Dorsolateral prefrontal cortex (tissue), 120 donors: ENCODE measurements at regions of chr6 and their contacts with region 1.

Region 1: DNA sequence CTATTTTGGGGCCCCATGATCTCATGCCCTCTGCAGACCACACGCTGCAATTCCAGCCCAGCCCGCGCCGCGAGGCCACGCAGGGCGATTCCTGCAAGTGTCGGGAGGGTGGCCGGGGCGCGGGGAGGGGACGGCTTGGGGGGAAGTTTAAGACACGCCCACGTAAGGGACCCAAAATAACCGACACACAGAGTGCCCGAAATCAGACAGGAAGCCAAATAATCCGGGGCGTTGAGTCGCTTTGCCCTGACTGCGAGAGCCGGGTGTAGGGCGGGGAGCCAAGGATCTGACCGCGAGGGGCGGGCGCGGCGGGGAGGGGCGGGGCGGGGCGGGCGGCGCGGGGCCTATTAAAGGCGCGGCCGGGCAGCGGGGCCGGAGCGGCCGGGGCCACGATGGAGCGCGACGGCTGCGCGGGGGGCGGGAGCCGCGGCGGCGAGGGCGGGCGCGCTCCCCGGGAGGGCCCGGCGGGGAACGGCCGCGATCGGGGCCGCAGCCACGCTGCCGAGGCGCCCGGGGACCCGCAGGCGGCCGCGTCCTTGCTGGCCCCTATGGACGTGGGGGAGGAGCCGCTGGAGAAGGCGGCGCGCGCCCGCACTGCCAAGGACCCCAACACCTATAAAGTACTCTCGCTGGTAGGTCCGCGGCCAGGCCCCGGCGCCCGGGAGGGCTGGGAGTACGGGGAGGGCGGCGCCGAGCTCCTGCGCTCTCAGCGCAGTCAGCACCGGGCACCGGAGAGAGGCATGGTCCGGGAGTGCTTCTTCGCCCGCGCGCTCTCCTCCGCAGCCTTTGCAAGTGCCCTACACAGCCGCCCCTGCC is at the start of gene ENPP1:
- DNase-seq: peak; percentile 57 to 79 (median 70)
- H3K4me3 ChIP-seq: peak within 1 kb of the TSS; percentile 56 to 88 (median 76)
- H3K27ac ChIP-seq: peak within 1 kb of the TSS in 42 of 59 donors; percentile 0 to 77 (median 48)
- H3K27me3 ChIP-seq: no peaks in the 10 kb centered on the region
- CTCF ChIP-seq: peak in 44 of 56 donors; percentile 7 to 52 (median 34)
- total RNA-seq, gene ENPP1: 0.87 to 5.2 (median 1.6) TPM

Region 2: DNA sequence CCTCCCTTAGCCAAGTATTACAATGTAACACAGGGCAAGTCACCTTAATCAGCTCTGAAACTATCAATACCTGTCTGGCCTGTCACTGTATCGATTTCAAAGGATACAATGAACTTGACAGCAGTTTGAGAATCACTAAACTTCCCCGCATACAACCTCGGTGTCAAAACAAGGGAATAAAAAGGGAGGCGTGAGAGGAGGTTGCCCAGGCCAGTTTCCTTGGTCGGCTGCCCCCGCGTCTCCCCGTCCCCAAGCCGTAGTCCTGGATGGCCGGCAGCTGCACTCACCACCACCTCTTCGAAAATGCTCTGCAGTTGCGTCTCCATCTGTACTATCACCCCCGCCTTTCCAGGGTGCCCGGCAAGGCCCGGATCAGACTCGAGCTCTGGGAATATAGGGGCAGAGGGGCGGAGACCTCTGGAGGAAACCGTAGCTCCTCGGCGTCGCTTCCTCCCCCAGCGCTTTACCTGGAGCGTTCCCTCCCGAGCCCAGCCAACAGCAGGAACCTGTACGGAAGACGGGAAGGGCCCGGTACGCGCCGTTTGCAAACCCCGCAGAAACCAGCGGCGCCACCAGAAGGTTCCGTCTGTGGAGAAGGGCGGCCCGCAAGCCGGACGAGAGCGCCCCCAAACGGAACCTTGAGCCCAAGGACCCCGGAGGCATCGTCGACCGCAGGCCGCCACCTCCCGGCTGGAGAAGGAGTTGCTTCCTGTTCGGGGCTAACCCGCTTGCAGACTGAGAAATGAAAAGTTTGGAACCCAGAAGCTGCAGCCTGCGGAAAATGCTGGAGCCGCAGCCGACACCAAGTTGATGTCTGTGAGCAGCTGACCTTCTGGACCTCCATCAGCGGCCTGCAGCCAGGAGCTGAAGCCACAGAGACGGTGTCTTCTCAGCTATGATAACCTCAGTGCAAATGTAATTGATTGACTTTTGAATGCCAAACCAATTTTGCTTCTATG is 179.8 kb before region 1 on chr6 and contains the start of gene MED23:
- intact Hi-C with region 1: loop called in 1 of 2 experiments (anchors 2 kb)
- DNase-seq: peak; percentile 88 to 97 (median 94)
- H3K4me3 ChIP-seq: peak within 1 kb of the TSS; percentile 60 to 98 (median 83)
- H3K27ac ChIP-seq: peak within 1 kb of the TSS in 56 of 59 donors; percentile 7 to 91 (median 68)
- H3K27me3 ChIP-seq: no peaks in the 10 kb centered on the region
- CTCF ChIP-seq: peak; percentile 89 to 100 (median 99)
- total RNA-seq, gene MED23: 28.0 to 46.3 (median 36.8) TPM

Region 3: GRCh38 chr6:131694831-131695426 is 112.9 kb before region 1 on chr6:
- intact Hi-C with region 1: loop called in 1 of 2 experiments (anchors 5 kb)
- DNase-seq: peak in 4 of 10 donors; percentile 4 to 48 (median 27)
- H3K4me3 ChIP-seq: no peak overlapping the region
- H3K27ac ChIP-seq: no peak overlapping the region
- H3K27me3 ChIP-seq: no peaks in the 10 kb centered on the region
- CTCF ChIP-seq: peak; percentile 17 to 93 (median 75)